Activated B cell treated with CpG ODN at 0.5 μM for 24 hours (primary cell): ENCODE measurements at regions of chr3 and their contacts with region 1.

Region 1: DNA sequence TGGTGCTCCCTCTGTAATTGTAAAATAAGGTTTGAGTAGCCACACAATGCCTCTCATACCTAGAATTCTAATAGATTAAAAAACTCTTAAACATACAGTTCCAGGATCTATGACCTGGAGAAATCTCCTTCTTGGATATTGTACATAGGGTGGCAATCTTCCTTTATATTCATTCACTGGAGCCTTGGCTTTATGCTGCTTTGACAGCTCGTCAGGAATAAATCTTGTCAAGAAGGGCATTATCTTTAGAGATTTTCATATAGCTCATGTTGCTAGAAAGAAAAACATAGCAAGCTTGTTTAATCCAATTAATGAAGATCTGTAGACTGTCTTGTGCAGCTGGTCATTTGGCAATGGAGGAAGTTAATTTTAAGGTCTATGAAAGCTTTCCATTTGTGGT is 131.1 kb downstream of the PYDC2 start:
- DNase-seq: no peak
- ATAC-seq: no peak
- H3K4me3 Mint-ChIP-seq: no peak overlapping the region
- H3K27ac Mint-ChIP-seq: no peak overlapping the region
- H3K4me1 Mint-ChIP-seq: no peaks in the 10 kb centered on the region
- H3K27me3 Mint-ChIP-seq: no peaks in the 10 kb centered on the region
- CTCF ChIP-seq: no peak

Region 2: DNA sequence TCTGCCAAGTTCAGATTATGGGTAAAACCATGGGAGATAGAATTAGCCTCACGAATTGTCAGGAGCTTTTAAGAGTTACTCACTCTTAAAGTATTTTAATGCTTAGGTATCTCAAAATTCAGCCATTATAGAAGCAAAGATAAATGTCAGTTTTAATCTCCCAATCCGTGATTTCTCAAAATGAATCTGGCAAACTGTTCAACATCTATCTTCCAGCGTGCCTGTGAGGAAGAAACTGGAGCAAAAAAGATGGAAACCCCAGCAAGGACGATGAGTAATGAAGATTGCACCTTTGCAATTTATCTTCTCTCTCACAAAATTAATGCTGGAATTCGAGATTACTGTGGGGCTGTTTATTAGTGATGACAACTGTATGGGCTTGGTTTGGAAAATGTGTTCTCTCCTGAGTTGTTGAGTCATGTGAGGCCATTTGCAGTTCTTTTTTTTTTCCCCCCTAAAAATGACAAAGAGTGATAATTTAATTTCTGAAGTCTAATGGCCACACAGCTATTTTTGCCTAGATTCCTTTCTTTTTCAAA is 60.6 kb before region 1 on chr3:
- CTCF ChIA-PET with region 1: no interaction called
- POLR2A ChIA-PET with region 1: no interaction called
- intact Hi-C with region 1: loop called (anchors 10 kb)
- DNase-seq: no peak
- ATAC-seq: no peak
- H3K4me3 Mint-ChIP-seq: no peak overlapping the region
- H3K27ac Mint-ChIP-seq: no peak overlapping the region
- H3K4me1 Mint-ChIP-seq: no peaks in the 10 kb centered on the region
- H3K27me3 Mint-ChIP-seq: peaks cover 2% of the 10 kb centered on the region
- CTCF ChIP-seq: no peak